CD4-positive, alpha-beta T cell (primary cell): ENCODE measurements at regions of chr19 and their contacts with region 1.

Region 1: DNA sequence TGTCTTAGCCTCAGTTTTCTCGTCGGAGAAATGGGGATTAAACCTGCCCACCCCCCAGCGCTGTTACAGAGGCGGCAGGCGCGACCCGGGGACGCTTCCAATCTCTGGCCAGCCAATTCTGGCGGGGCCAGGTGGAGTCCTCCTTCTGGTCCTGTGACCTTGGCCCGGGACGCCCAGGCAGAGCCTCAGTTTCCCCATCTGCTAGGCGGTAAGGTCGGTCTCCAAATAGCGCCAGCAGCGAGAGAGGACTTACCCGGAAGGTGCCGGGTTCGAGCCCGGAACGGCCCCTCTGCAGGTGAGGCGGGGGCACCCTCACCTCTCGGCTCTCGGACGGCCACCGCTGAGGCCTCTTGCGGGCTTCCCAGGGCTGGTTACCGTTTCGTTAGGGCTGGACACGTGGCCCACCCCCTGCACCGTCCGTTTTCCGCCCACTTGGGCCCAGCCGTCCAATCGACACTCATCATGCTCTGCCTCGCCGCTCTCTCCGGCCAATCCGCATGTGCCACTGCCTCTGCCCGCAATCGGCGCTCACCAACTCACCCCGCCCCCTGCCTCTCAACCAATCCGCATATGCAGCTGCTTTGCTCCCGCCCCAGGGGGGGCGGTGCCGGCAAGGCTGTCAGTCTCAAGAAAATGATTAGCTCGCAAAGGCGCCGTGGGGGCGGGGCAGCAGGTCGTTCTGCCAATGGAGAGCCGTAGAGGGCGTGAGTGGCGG is at the start of gene ISOC2:
- DNase-seq: peak; percentile 100
- ATAC-seq: peak; percentile 98
- H3K4me3 ChIP-seq: peak within 1 kb of the TSS; percentile 83
- H3K4me3 Mint-ChIP-seq: peak within 1 kb of the TSS; percentile 96
- H3K27ac ChIP-seq: peak within 1 kb of the TSS; percentile 47 to 72
- H3K27ac Mint-ChIP-seq: peak within 1 kb of the TSS; percentile 68
- H3K4me1 ChIP-seq: peaks cover 19% of the 10 kb centered on the region
- H3K4me1 Mint-ChIP-seq: peaks cover 17% of the 10 kb centered on the region
- H3K27me3 ChIP-seq: no peaks in the 10 kb centered on the region
- H3K27me3 Mint-ChIP-seq: no peaks in the 10 kb centered on the region
- CTCF ChIP-seq: no peak
- total RNA-seq, gene ISOC2: 1.5 to 2.2 TPM

Region 2: GRCh38 chr19:55407800-55408532 is 53.5 kb before region 1 on chr19:
- CTCF ChIA-PET with region 1: no interaction called
- POLR2A ChIA-PET with region 1: interaction called, 8 read pairs
- intact Hi-C with region 1: loop called in 1 of 2 experiments (anchors 5 kb)
- DNase-seq: peak; percentile 91 to 99 (median 96)
- ATAC-seq: peak; percentile 92
- H3K4me3 ChIP-seq: peak overlapping the region; percentile 61
- H3K4me3 Mint-ChIP-seq: peak overlapping the region; percentile 94
- H3K27ac ChIP-seq: peak overlapping the region; percentile 96 to 100
- H3K27ac Mint-ChIP-seq: peak overlapping the region; percentile 99
- H3K4me1 ChIP-seq: peaks cover 30% of the 10 kb centered on the region
- H3K4me1 Mint-ChIP-seq: peaks cover 29% of the 10 kb centered on the region
- H3K27me3 ChIP-seq: no peaks in the 10 kb centered on the region
- H3K27me3 Mint-ChIP-seq: no peaks in the 10 kb centered on the region
- CTCF ChIP-seq: no peak

Region 3: DNA sequence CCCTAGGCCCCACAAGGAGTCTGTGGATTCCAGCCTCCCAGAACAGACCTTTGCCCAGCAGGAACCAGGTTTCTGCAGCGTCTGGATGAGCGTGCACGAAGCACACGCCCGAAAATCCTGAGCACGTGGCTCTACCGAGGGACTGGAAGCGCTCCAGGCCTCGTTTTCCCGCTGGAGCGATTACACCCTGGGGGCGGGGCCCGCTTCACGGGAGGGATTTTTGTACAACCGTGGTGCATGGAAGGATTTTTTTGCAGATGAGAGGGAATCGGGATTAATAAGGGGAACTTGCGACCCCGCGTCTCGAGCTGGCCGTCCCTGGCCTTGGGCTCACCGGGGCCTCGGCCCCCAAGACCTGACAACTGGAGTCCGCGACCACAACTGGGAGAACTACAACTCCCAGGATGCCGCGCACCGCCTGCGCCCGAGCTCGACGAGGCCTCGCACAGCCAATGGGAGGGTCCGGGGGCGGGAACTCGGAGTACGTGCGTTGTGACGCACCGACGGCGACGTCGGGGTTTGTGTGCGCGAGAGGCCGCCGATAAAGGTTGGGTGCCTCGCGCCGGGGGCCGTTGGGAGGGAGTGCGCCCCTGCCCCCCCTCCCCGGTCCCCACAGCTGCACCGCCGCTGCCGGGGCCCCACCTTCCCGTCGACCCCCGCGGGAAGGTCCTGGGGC is 14.8 kb after region 1 on chr19 and contains the start of gene ZNF628:
- CTCF ChIA-PET with region 1: interaction called, 4 read pairs
- POLR2A ChIA-PET with region 1: interaction called, 35 read pairs
- intact Hi-C with region 1: no loop called
- DNase-seq: peak; percentile 94 to 99 (median 98)
- ATAC-seq: peak; percentile 93
- H3K4me3 ChIP-seq: peak within 1 kb of the TSS; percentile 76
- H3K4me3 Mint-ChIP-seq: peak within 1 kb of the TSS; percentile 91
- H3K27ac ChIP-seq: peak within 1 kb of the TSS; percentile 72 to 77
- H3K27ac Mint-ChIP-seq: peak within 1 kb of the TSS; percentile 93
- H3K4me1 ChIP-seq: peaks cover 26% of the 10 kb centered on the region
- H3K4me1 Mint-ChIP-seq: peaks cover 38% of the 10 kb centered on the region
- H3K27me3 ChIP-seq: no peaks in the 10 kb centered on the region
- H3K27me3 Mint-ChIP-seq: no peaks in the 10 kb centered on the region
- CTCF ChIP-seq: no peak
- total RNA-seq, gene ZNF628: 26.6 to 27.2 TPM